GM13976 (cell line): ENCODE measurements at regions of chr10 and their contacts with region 1.

Region 1: DNA sequence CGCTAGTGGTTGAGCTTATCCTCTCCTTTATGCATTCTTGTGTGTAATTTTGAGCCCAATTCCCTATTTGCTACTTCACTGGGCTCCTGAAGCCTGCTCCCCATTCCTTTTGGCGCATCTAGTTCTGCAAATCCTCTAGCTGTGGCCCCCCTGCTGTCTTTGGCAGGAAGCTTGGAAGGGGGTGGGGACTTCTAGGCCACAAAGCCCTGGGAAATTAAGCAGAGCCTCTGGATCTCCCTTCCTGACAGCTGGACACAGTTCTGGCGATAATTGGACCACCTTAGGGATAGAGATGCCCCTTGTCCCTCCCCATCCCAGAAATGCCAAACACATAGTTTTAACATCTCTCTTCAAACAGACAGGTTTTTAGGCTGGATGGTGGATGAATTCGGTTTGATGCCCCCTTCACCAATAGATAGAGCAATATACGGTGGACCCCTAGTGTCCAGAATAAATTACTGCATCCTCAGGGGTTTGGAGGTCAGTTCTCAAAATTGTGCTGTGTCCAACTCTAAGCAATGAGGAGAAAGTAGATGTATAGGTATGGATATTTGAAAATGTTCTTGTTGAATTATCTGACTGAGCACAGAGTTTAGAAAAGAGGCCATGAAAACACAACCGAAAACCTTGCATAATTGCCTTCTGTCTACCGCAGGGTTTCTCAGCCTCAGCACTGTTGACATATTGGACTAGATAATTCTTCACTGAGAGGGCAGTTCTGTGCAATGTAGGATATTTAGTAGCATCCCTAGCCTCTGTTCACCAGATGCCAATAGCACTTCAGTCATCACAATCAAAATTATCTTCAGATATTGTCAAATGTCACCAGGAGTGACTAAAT is 75.5 kb downstream of the PAPSS2 start:
- DNase-seq: peak; percentile 51
- CTCF ChIP-seq: peak; percentile 45

Region 2: DNA sequence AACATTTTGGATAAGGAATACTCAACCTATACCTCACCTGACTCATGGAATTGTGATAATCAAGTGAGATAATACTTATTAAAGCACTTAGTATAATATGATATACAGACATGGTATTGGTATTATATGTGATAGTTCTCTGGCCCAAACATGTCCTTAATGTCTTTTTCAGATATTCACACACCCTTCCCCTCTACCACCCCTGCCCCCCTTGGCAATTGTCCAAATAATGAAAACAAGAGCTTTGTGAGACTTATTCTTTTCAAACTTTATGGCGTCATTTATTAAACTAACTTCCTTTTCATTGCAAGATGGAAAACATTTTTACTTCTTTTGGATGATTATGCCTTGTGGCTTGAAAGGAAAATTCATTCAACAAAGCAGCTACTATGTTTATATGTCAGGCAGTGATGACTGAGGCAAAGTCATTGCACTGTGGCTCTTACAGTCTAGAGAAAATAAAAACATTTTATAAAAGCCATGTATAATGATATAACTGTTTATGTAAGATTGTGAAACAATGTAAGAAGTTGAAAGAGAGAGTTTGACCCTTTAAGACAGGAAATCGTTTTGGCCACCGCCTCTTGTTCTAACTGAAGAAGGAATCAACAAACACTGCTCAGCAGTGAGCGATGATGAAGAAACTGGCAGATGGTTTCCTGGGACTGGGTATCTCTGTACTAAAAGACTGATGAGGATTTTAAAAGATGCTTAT is 203.1 kb before region 1 on chr10:
- in situ Hi-C with region 1: loop called (anchors 10 kb)
- DNase-seq: no peak
- CTCF ChIP-seq: no peak

Region 3: GRCh38 chr10:87659571-87660483 is 75.4 kb before region 1 on chr10 and contains the start of gene PAPSS2:
- in situ Hi-C with region 1: loop called (anchors 10 kb)
- DNase-seq: peak; percentile 65
- CTCF ChIP-seq: peak; percentile 9